ENCODE measurements at regions of chr10 and their contacts with region 1.

Region 1: DNA sequence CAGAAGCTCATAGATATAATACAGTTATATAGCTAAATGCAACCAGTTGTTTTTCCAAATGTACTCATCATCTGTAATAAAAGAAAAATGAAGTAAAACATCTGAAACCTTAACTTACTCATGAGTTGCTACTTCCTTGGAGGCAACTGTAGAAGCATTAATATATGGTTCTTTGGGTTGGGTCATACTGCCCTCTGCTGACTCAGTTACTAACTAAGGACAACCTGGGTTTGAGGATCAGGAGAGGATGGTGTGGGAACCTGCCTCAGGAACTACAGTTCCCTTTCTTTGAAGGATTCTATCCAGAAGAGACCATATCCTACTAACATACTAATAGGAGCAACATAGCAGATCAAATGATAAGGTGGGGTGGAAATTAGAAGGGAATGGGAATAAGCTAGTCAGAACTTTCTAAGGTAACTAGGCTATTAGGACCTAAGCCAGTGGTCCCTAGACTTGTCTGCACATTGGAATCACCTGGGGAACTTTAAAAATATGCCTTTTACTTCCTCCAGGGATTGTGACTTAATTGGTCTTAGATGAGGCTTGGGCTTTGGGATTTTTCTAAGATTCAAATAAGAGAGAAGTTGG is 20.7 kb downstream of the COX15 start:
- DNase-seq: peak; percentile 66
- H3K4me3 Mint-ChIP-seq: no peak overlapping the region
- H3K27ac Mint-ChIP-seq: no peak overlapping the region
- H3K4me1 Mint-ChIP-seq: peaks cover 13% of the 10 kb centered on the region
- H3K27me3 Mint-ChIP-seq: no peaks in the 10 kb centered on the region

Region 2: DNA sequence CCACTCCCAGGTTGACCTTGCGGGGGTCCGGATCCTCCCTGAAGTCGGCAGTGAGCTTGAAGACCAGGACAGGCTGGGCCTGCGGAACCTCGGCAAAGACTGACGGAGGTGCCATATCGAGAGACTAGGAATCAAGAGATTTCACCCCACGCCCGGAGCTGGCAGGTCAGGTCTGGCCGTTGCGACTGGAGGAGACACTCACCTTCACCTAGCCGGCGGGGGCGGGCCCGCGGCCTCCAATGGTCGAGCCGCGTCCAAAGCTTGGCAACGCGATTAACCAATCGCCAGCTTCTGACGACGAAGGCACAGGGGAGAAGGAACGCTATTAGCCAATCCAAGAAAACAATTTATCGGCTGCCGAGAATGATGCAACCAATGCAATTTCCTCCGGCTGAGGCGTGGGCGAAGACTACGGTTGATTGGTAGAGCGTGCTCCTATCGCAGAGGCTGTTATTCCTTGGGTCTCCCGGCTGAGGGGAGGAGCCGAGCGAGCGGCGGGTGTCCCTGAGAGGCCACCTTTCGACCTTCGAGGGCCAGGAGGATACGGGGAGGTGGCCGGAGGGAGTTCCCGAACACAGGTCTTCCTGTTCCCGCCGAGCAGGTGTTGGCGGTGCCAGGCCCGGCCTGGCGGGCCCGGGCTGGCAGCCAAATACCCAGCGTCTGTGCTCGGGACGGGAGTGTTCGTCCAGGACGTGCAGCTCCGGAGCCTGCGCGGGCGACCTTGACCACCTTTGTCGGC is 280.6 kb before region 1 on chr10 and contains the start of gene GOT1:
- CTCF ChIA-PET with region 1: interaction called, 4 read pairs
- intact Hi-C with region 1: loop called (anchors 2 kb)
- DNase-seq: peak; percentile 99
- H3K4me3 Mint-ChIP-seq: peak within 1 kb of the TSS; percentile 95
- H3K27ac Mint-ChIP-seq: peak within 1 kb of the TSS; percentile 90
- H3K4me1 Mint-ChIP-seq: peaks cover 38% of the 10 kb centered on the region
- H3K27me3 Mint-ChIP-seq: no peaks in the 10 kb centered on the region
- total RNA-seq, gene GOT1: 62.6 to 67.3 TPM

Region 3: GRCh38 chr10:99435986-99436638 is 275.1 kb before region 1 on chr10:
- CTCF ChIA-PET with region 1: interaction called, 4 read pairs
- intact Hi-C with region 1: loop called (anchors 1 kb)
- DNase-seq: no peak
- H3K4me3 Mint-ChIP-seq: no peak overlapping the region
- H3K27ac Mint-ChIP-seq: no peak overlapping the region
- H3K4me1 Mint-ChIP-seq: peaks cover 21% of the 10 kb centered on the region
- H3K27me3 Mint-ChIP-seq: no peaks in the 10 kb centered on the region

Region 4: DNA sequence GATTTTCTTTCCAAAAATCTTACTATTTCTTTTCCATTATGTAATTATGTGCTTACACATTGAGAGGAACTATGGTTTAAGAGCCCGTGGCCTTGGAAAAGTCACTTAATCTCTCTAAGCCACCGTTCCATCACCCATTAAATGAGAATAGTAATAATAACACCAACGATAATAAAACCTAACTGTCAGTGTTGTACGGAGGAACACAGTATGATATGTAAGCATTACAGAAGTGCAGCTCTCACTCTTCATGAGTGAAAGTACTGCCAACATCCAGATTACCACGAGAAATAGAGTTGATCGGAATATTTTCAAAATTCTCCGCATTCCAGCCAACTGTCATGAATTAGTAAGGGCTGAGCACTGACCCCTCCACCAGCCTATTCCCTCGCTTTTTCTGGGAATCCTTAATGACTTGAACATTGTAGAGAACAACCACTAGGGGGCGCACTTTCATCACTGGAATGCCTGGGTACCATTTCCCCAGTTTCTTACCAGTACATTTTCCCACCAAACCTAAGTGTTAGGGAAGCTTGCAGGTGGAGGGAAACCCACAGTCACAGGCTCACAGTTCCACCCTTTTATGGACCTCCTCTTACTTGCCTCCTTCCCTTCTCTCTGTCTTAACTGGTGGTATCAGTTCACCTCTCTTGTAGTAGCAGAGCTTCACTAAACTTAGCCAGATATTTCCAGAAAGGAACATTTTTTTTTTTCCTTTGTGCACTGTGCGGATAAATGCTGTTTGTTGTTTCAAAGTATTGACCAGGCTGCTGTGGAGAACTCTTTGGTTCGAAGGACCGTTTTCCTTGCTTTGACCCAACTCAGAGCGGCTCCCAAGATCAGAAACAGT is 150.7 kb before region 1 on chr10:
- CTCF ChIA-PET with region 1: interaction called, 19 read pairs
- intact Hi-C with region 1: loop called (anchors 1 kb)
- DNase-seq: peak; percentile 69
- H3K4me3 Mint-ChIP-seq: no peak overlapping the region
- H3K27ac Mint-ChIP-seq: no peak overlapping the region
- H3K4me1 Mint-ChIP-seq: peaks cover 3% of the 10 kb centered on the region
- H3K27me3 Mint-ChIP-seq: peaks cover 19% of the 10 kb centered on the region

Region 5: DNA sequence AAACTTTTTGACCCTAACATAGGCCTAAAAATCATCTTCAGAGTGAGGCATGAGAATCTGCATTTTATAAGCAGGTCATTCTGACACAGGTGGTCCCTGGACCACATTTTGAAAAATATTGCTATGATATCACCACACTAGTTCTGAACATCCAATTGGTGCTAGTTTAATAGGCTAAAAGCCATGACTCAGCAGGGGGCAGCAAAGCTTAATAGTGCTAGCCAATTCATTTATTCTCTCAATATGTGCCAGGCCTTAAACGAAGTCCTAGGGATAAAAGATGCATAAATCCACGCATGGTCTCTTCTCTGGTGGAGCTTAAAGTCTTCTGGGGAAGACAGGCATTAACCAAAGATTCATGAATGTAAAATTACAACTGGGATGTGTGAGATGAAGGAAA is 80.8 kb before region 1 on chr10:
- CTCF ChIA-PET with region 1: no interaction called
- intact Hi-C with region 1: loop called (anchors 1 kb)
- DNase-seq: peak; percentile 44
- H3K4me3 Mint-ChIP-seq: no peak overlapping the region
- H3K27ac Mint-ChIP-seq: no peak overlapping the region
- H3K4me1 Mint-ChIP-seq: no peaks in the 10 kb centered on the region
- H3K27me3 Mint-ChIP-seq: peaks cover 5% of the 10 kb centered on the region